Esophagus muscularis mucosa (tissue), 4 donors: ENCODE measurements at regions of chr7 and their contacts with region 1.

Region 1: GRCh38 chr7:33932832-33933468 is 27.6 kb downstream of the BMPER start:
- DNase-seq: peak; percentile 95
- H3K4me3 ChIP-seq: peak overlapping the region; percentile 28 to 49 (median 36)
- H3K27ac ChIP-seq: peak overlapping the region in 1 of 4 donors; percentile 3
- H3K4me1 ChIP-seq: peaks cover 0 to 16% (median 14%) of the 10 kb centered on the region in 4 donors
- H3K27me3 ChIP-seq: no peaks in the 10 kb centered on the region
- CTCF ChIP-seq: peak; percentile 90 to 99 (median 98)
- EP300 ChIP-seq: no peak
- POLR2A ChIP-seq: no peak

Region 2: DNA sequence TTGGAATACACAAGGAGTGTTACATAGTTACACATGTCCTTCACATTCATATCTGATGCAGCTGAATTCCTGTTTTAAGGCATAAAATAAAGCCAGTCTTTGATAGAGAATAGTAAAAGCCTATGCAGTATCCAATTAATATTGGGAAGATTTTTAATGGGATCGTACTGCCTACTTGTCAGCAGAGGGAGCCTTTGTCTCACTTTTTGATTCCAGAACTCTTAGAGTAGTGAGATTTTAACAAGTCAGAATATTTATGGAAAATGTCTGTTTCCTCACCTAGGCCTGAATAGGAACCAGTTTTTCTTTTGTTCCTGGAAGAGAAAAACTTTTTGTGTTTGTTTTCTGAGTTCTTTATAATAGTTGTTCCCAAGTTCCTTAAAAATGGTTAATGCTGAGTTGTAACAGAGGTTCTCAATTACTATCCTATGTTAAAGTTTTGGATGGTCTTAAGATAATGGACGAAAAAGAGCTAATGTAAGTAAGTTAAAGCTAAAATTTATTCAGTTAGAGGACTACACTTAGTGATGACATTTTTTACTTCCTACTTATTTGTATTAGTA is 689.5 kb before region 1 on chr7:
- intact Hi-C with region 1: loop called (anchors 5 kb)
- DNase-seq: no peak
- H3K4me3 ChIP-seq: no peak overlapping the region
- H3K27ac ChIP-seq: no peak overlapping the region
- H3K4me1 ChIP-seq: peaks cover 0 to 5% (median 0%) of the 10 kb centered on the region in 4 donors
- H3K27me3 ChIP-seq: no peaks in the 10 kb centered on the region
- CTCF ChIP-seq: peak; percentile 50 to 68 (median 65)
- EP300 ChIP-seq: no peak
- POLR2A ChIP-seq: no peak

Region 3: GRCh38 chr7:33757562-33758165 is 175.3 kb before region 1 on chr7:
- intact Hi-C with region 1: loop called (anchors 10 kb)
- DNase-seq: no peak
- H3K4me3 ChIP-seq: no peak overlapping the region
- H3K27ac ChIP-seq: no peak overlapping the region
- H3K4me1 ChIP-seq: peaks cover 0 to 7% (median 3%) of the 10 kb centered on the region in 4 donors
- H3K27me3 ChIP-seq: no peaks in the 10 kb centered on the region
- CTCF ChIP-seq: peak; percentile 40 to 63 (median 62)
- EP300 ChIP-seq: no peak
- POLR2A ChIP-seq: no peak

Region 4: GRCh38 chr7:34165929-34166550 is 233.1 kb after region 1 on chr7:
- intact Hi-C with region 1: no loop called
- DNase-seq: no peak
- H3K4me3 ChIP-seq: no peak overlapping the region
- H3K27ac ChIP-seq: no peak overlapping the region
- H3K4me1 ChIP-seq: peaks cover 0 to 10% (median 1%) of the 10 kb centered on the region in 4 donors
- H3K27me3 ChIP-seq: no peaks in the 10 kb centered on the region
- CTCF ChIP-seq: peak; percentile 23 to 50 (median 30)
- EP300 ChIP-seq: no peak
- POLR2A ChIP-seq: no peak